Activated T-helper 1 cell treated with anti-CD3 and anti-CD28 coated beads, Interleukin-12 subunit alpha, Interleukin-12 subunit beta, Interleukin-2, Interleukin-4 antibody, amounts not matched to agents 30 ng/mL and 10 ng/mL and 1 ng/mL, durations not matched to agents 14 hours and 24 hours and 36 hours (primary cell): ENCODE measurements at regions of chr18 and their contacts with region 1.

Region 1: DNA sequence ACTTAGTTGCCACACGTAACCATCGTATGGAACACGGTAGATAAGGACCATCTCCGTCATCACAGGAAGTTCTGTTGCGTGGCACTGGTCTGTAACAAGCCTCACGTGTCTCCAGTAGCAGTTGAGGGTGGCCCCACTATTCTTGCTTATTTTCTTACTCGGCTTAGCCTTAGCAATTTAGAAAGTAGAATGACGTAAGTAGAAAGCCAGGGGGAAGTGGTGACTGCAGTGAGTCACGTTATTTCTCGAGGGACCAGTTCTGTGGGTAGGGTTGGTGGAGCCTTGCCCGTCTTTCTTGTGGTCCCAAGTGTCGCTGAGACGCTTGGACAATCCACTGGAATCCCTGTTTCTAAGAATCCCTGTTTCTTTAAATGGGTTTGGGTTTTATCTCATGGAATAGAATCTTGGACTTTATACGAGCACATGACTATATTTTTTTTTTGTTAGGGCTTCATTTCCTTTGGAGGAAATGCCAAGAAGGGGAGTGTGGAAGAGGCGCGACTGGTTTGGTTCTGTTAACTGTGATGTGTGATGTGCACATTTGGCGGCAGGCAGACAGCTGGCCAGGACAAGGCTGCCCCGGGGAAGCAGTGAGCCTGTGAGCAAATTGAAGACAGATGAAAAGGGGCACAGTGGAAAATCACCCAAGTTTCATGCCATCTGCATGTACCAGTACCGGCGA is 96.2 kb downstream of the CABLES1 start:
- DNase-seq: peak; percentile 80
- H3K4me3 Mint-ChIP-seq: peak overlapping the region; percentile 72
- H3K27ac Mint-ChIP-seq: peak overlapping the region; percentile 89
- H3K4me1 Mint-ChIP-seq: peaks cover 64% of the 10 kb centered on the region
- H3K27me3 Mint-ChIP-seq: peaks cover 8% of the 10 kb centered on the region

Region 2: DNA sequence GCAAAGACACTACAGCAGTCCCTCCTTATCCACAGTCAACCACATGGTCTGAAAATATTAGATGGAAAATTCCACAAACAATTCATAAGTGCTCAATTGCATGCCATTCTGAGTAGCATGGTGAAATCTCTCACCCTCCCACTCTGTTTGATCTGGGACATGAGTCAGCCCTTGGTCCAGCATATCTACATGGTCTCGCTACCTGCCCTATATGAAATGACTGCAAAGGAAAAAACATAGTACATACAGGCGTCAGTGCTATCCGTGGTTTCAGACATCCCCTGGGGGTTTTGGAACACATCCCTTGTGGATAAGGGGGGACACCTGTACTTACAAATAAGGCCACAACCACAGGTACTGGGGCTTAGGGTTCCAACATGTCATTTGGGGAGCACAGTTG is 22.4 kb before region 1 on chr18:
- intact Hi-C with region 1: loop called (anchors 1 kb)
- DNase-seq: no peak
- H3K4me3 Mint-ChIP-seq: no peak overlapping the region
- H3K27ac Mint-ChIP-seq: peak overlapping the region; percentile 68
- H3K4me1 Mint-ChIP-seq: peaks cover 6% of the 10 kb centered on the region
- H3K27me3 Mint-ChIP-seq: no peaks in the 10 kb centered on the region

Region 3: DNA sequence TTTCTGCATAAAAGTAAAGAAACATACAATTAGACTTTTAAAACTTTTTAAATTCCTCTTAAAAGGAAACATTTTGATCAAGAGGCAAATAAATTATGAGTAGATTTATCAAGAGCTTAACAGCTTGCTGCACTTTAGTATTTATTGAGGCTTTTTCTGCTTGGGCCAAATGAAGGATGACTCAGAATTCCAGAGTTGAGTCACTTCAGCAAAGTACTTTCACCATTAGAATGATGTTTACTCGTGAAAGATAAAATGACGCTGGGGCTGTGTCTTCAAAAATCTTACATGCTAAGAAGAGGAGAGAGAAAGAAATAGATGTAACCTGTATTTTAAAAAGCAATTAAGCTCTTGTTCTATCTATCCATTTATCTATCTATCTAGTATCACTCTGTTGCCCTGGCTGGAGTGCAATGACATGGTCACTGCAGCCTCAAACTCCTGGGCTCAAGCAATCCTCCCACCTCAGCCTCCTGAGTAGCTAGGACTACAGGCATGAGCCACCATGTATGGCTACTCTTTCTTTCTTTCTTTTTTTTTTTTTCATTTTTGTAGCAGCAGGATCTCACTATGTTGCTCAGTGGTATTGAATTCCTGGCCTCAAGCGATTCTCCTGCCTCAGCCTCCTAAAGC is 146.3 kb after region 1 on chr18:
- intact Hi-C with region 1: loop called (anchors 5 kb)
- DNase-seq: no peak
- H3K4me3 Mint-ChIP-seq: no peak overlapping the region
- H3K27ac Mint-ChIP-seq: peak overlapping the region; percentile 72
- H3K4me1 Mint-ChIP-seq: peaks cover 11% of the 10 kb centered on the region
- H3K27me3 Mint-ChIP-seq: peaks cover 7% of the 10 kb centered on the region

Region 4: GRCh38 chr18:23452728-23453679 is 221.5 kb after region 1 on chr18 and contains the start of gene RIOK3:
- intact Hi-C with region 1: loop called (anchors 2 kb)
- DNase-seq: peak; percentile 94
- H3K4me3 Mint-ChIP-seq: peak within 1 kb of the TSS; percentile 97
- H3K27ac Mint-ChIP-seq: peak within 1 kb of the TSS; percentile 92
- H3K4me1 Mint-ChIP-seq: peaks cover 39% of the 10 kb centered on the region
- H3K27me3 Mint-ChIP-seq: no peaks in the 10 kb centered on the region
- total RNA-seq, gene RIOK3: 40.8 and 52.2 TPM in 2 replicates